ENCODE measurements at regions of chr12 and their contacts with region 1.

Region 1: DNA sequence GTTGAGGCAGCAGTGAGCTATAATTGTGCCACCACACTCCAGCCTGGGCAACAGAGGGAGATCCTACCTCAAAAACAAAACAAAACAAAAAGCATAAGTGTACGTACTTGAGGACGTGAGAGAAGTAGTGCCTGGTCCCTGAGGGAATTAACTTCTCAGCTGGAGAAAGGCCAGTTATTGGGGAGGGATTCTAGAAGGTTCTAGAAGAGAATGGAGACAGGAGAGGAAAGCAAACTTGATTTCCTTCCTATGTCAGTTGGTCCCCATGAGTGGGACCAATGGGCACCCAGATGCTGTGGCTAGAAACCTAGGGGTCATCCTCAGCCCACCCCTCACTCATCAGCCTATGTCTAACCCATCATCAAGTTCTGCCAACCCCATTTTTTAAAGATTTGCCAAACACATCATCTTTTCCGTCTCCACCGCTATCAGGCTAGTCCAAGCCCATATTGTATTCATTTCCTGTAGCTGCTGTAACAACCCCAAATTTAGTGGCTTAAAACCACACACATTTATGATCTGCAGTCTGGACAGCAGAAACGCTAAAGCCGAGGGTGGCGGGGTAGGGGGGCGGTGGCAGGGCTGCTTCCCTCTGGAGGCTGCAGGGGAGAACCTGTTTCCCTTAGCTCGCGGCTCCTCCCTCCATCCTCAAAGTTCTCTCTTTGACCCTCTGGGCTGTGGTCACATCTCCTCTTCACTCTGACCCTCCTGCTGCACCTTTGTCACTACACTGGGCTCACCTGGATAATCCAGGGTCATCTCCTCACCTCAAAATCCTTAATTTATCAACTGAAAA is 7.2 kb upstream of the RBM19 start:
- DNase-seq: no peak
- H3K4me3 ChIP-seq: no peak overlapping the region
- H3K27ac ChIP-seq: no peak overlapping the region
- H3K4me1 ChIP-seq: no peaks in the 10 kb centered on the region
- H3K27me3 ChIP-seq: no peaks in the 10 kb centered on the region
- CTCF ChIP-seq: no peak
- POLR2A ChIP-seq: no peak

Region 2: DNA sequence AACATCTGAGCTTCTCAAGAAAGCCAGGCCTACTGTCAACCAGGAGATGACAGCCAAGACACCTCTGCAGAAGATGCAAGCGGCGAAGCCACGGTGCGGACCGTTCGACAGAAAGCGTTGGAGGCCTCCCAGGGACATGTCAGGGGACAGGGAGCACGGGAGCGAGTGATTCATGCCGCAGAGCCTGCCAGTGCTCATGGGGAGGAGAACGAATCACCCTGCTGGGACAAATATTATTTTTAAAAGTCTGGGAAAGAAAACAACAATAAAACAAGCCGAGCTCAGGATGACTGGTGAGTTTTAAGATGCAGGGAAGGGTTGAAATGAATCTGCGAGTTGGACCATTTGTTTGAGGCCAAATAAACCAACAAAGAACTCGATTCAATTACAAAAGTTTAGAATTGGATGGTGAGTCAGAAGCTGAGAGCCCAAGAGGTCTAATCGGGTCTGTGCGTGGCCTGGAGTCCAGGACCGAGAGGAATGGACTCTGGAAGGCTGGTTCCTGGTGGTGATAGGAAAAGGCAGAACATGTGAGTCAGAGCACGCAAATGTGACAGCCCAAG is 98.2 kb before region 1 on chr12:
- intact Hi-C with region 1: no loop called
- DNase-seq: peak in 1 of 2 donors; percentile 90
- H3K4me3 ChIP-seq: no peak overlapping the region
- H3K27ac ChIP-seq: peak overlapping the region; percentile 65
- H3K4me1 ChIP-seq: peaks cover 14% of the 10 kb centered on the region
- H3K27me3 ChIP-seq: no peaks in the 10 kb centered on the region
- CTCF ChIP-seq: no peak
- POLR2A ChIP-seq: no peak

Region 3: GRCh38 chr12:114508529-114509129 is 535.3 kb after region 1 on chr12:
- intact Hi-C with region 1: loop called (anchors 10 kb)
- DNase-seq: no peak
- H3K4me3 ChIP-seq: no peak overlapping the region
- H3K27ac ChIP-seq: no peak overlapping the region
- H3K4me1 ChIP-seq: no peaks in the 10 kb centered on the region
- H3K27me3 ChIP-seq: no peaks in the 10 kb centered on the region
- CTCF ChIP-seq: peak; percentile 47 to 80 (median 57)
- POLR2A ChIP-seq: no peak

Measured in vagina (tissue), 2 donors.